Naive thymus-derived CD4-positive, alpha-beta T cell (primary cell): ENCODE measurements at regions of chr6 and their contacts with region 1.

Region 1: DNA sequence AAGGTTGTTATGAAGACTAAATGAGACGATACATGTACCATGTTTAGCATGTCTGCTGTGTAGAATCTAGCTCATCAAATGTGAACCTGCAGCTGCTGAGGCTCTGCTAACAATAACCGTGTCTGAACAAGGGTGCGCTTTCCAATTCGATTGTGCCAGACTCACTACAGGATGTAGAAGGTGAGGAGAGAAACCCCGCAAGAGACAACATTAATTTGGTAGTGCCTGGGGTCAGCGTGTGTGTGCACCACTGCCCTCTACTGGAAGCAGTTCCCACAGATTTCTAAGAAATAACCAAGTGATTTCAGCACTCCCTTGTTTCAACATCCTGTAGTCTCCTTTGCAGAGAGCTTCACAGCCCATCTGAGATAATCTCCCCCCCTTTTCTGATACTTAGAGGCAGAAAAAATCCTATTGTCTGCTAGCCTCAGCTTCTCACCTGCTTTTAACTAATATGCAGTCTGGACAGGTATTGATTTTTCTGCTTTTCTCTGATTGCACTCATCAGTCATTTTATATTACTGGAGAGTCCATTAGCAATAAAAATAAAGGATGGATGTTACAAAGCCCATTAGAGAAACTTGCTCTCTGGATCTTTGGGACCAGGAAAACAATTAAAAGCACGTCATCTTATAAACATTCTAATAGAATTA is 96.7 kb upstream of the BACH2 start:
- DNase-seq: peak; percentile 43 to 87 (median 81)
- ATAC-seq: peak; percentile 81
- H3K4me3 ChIP-seq: no peak overlapping the region
- H3K4me3 Mint-ChIP-seq: peak overlapping the region in 9 of 10 donors; percentile 2 to 59 (median 26)
- H3K27ac ChIP-seq: no peak overlapping the region
- H3K27ac Mint-ChIP-seq: peak overlapping the region; percentile 7 to 77 (median 26)
- H3K4me1 ChIP-seq: peaks cover 18 to 29% of the 10 kb centered on the region in 2 donors
- H3K4me1 Mint-ChIP-seq: peaks cover 15 to 43% (median 38%) of the 10 kb centered on the region in 7 donors
- H3K27me3 ChIP-seq: no peaks in the 10 kb centered on the region
- H3K27me3 Mint-ChIP-seq: peaks cover 0 to 4% (median 0%) of the 10 kb centered on the region in 5 donors

Region 2: GRCh38 chr6:89873721-89874120 is 519.6 kb before region 1 on chr6:
- CTCF ChIA-PET with region 1: no interaction called
- POLR2A ChIA-PET with region 1: no interaction called
- intact Hi-C with region 1: no loop called
- DNase-seq: no peak
- ATAC-seq: no peak
- H3K4me3 ChIP-seq: no peak overlapping the region
- H3K4me3 Mint-ChIP-seq: no peak overlapping the region
- H3K27ac ChIP-seq: no peak overlapping the region
- H3K27ac Mint-ChIP-seq: peak overlapping the region in 1 of 9 donors; percentile 4
- H3K4me1 ChIP-seq: no peaks in the 10 kb centered on the region
- H3K4me1 Mint-ChIP-seq: peaks cover 0 to 7% (median 0%) of the 10 kb centered on the region in 7 donors
- H3K27me3 ChIP-seq: no peaks in the 10 kb centered on the region
- H3K27me3 Mint-ChIP-seq: no peaks in the 10 kb centered on the region

Region 3: DNA sequence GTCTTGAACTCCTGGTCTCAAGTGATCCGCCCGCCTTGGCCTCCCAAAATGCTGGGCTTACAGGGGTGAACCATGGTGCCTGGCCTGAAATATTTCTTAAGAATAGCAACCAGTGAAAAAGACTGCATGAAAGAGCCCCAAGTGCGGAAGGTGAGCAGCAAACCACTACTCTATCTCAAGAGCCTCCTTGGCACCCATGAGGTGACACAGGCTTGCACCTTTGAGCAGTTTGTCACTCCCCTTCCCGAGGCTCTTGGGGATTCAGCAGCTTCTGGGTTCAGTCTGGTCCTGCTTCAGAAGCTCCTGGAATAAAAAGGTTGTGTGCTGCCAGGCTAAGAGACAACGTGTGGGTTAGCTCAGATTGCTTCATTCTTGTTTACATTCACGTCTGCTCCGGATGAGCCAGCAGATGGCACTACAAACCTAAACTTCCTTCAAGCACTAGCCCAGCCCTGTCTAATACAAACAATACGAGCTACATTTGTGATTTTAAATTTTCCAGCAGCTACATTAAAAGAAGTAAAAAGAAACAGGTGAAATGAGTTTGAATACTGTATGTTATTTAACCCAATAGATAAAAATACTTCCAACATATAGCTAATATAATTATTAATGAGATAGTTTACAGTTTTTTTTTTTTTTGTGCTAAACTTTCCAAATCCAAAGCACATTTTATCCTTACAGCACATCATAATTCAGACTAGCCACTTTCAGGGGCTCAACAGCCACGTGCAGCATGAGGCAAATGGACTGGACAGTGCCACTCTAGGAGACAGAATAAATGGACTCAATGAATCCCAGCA is 452.9 kb before region 1 on chr6:
- CTCF ChIA-PET with region 1: interaction called, 26 read pairs
- POLR2A ChIA-PET with region 1: interaction called, 3 read pairs
- intact Hi-C with region 1: loop called (anchors 1 kb)
- DNase-seq: peak; percentile 22 to 80 (median 70)
- ATAC-seq: peak; percentile 90
- H3K4me3 ChIP-seq: no peak overlapping the region
- H3K4me3 Mint-ChIP-seq: peak overlapping the region in 1 of 10 donors; percentile 48
- H3K27ac ChIP-seq: peak overlapping the region; percentile 53
- H3K27ac Mint-ChIP-seq: peak overlapping the region in 8 of 9 donors; percentile 50 to 91 (median 78)
- H3K4me1 ChIP-seq: peaks cover 0 to 9% of the 10 kb centered on the region in 2 donors
- H3K4me1 Mint-ChIP-seq: peaks cover 6 to 75% (median 39%) of the 10 kb centered on the region in 7 donors
- H3K27me3 ChIP-seq: no peaks in the 10 kb centered on the region
- H3K27me3 Mint-ChIP-seq: no peaks in the 10 kb centered on the region

Region 4: GRCh38 chr6:90216072-90216977 is 177.0 kb before region 1 on chr6:
- CTCF ChIA-PET with region 1: interaction called, 5 read pairs
- POLR2A ChIA-PET with region 1: no interaction called
- intact Hi-C with region 1: loop called (anchors 1 to 5 kb)
- DNase-seq: peak in 5 of 9 donors; percentile 61 to 82 (median 63)
- ATAC-seq: peak; percentile 69
- H3K4me3 ChIP-seq: peak overlapping the region; percentile 18
- H3K4me3 Mint-ChIP-seq: peak overlapping the region in 7 of 10 donors; percentile 42 to 74 (median 68)
- H3K27ac ChIP-seq: peak overlapping the region; percentile 85
- H3K27ac Mint-ChIP-seq: no peak overlapping the region
- H3K4me1 ChIP-seq: peaks cover 0 to 97% of the 10 kb centered on the region in 2 donors
- H3K4me1 Mint-ChIP-seq: peaks cover 0 to 33% (median 31%) of the 10 kb centered on the region in 7 donors
- H3K27me3 ChIP-seq: no peaks in the 10 kb centered on the region
- H3K27me3 Mint-ChIP-seq: no peaks in the 10 kb centered on the region

Region 5: GRCh38 chr6:90350689-90351554 is 42.4 kb before region 1 on chr6:
- CTCF ChIA-PET with region 1: no interaction called
- POLR2A ChIA-PET with region 1: no interaction called
- intact Hi-C with region 1: loop called (anchors 1 to 5 kb)
- DNase-seq: peak in 8 of 9 donors; percentile 24 to 88 (median 83)
- ATAC-seq: peak; percentile 98
- H3K4me3 ChIP-seq: no peak overlapping the region
- H3K4me3 Mint-ChIP-seq: peak overlapping the region; percentile 5 to 64 (median 50)
- H3K27ac ChIP-seq: peak overlapping the region; percentile 57
- H3K27ac Mint-ChIP-seq: peak overlapping the region; percentile 57 to 95 (median 88)
- H3K4me1 ChIP-seq: peaks cover 5 to 11% of the 10 kb centered on the region in 2 donors
- H3K4me1 Mint-ChIP-seq: peaks cover 19 to 35% (median 28%) of the 10 kb centered on the region in 7 donors
- H3K27me3 ChIP-seq: no peaks in the 10 kb centered on the region
- H3K27me3 Mint-ChIP-seq: peaks cover 0 to 4% (median 0%) of the 10 kb centered on the region in 5 donors

Region 6: DNA sequence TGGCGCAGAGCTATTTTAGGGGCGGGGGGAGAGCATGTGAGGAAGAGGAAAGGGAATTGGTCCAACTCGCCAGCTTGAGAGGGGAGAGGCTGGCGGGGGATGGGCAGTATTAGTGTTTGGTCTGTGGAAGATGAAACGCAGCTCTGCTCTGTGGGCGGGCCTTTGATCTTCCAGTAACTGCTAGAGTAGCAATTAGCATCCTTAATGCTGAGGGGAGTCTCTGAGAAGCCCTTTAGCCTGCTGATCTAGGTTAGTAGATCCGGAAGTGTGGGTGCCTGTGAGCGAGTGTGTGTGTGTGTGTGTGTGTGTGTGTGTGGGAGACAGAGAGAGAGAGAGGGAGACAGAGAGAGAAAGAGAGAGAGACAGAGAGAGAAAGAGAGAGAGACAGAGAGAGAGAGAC is 20.5 kb after region 1 on chr6:
- CTCF ChIA-PET with region 1: interaction called, 9 read pairs
- POLR2A ChIA-PET with region 1: interaction called, 10 read pairs
- intact Hi-C with region 1: loop called (anchors 1 kb)
- DNase-seq: peak; percentile 29 to 83 (median 75)
- ATAC-seq: peak; percentile 95
- H3K4me3 ChIP-seq: peak overlapping the region; percentile 40
- H3K4me3 Mint-ChIP-seq: peak overlapping the region; percentile 70 to 87 (median 75)
- H3K27ac ChIP-seq: no peak overlapping the region
- H3K27ac Mint-ChIP-seq: peak overlapping the region; percentile 63 to 96 (median 91)
- H3K4me1 ChIP-seq: peaks cover 16 to 30% of the 10 kb centered on the region in 2 donors
- H3K4me1 Mint-ChIP-seq: peaks cover 15 to 68% (median 26%) of the 10 kb centered on the region in 7 donors
- H3K27me3 ChIP-seq: no peaks in the 10 kb centered on the region
- H3K27me3 Mint-ChIP-seq: peaks cover 0 to 2% (median 0%) of the 10 kb centered on the region in 5 donors

Region 7: GRCh38 chr6:90458353-90459224 is 65.2 kb after region 1 on chr6:
- CTCF ChIA-PET with region 1: interaction called, 7 read pairs
- POLR2A ChIA-PET with region 1: interaction called, 6 read pairs
- intact Hi-C with region 1: loop called in 1 of 2 experiments (anchors 1 kb)
- DNase-seq: peak in 6 of 9 donors; percentile 37 to 74 (median 48)
- ATAC-seq: peak; percentile 70
- H3K4me3 ChIP-seq: peak overlapping the region; percentile 26
- H3K4me3 Mint-ChIP-seq: peak overlapping the region in 9 of 10 donors; percentile 45 to 82 (median 74)
- H3K27ac ChIP-seq: no peak overlapping the region
- H3K27ac Mint-ChIP-seq: peak overlapping the region in 8 of 9 donors; percentile 21 to 91 (median 80)
- H3K4me1 ChIP-seq: peaks cover 25 to 30% of the 10 kb centered on the region in 2 donors
- H3K4me1 Mint-ChIP-seq: peaks cover 23 to 65% (median 47%) of the 10 kb centered on the region in 7 donors
- H3K27me3 ChIP-seq: no peaks in the 10 kb centered on the region
- H3K27me3 Mint-ChIP-seq: no peaks in the 10 kb centered on the region

Region 8: DNA sequence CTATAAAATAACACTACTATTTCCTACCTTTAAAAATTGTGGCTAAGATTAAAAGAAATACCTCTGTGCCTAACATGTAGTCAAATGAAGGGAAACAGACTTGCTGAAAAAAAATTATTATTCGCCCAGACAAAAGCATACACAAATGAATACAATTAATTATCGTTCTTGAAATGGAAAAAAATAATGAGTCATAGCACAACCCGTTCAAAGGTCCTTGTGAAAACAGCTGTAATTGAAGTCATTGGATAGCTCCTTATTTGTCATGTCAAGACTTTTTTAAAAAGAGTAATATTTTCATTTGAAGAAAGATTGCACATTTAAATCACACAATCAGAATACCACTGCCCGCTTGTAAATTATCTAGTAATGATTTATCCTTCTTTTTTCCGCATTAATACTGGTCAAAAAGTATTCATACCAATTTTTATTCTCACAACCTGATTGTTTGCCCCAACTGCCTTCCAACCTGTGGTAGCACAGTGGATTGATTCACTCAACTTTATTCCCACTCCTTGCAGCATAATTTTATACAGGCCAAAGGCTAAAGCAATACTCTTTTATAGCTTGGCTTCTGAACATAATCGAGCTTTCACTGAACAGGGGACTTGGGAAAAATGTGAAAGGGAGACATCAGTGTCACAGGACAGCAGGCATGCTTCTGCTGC is 848.7 kb after region 1 on chr6:
- CTCF ChIA-PET with region 1: no interaction called
- POLR2A ChIA-PET with region 1: no interaction called
- intact Hi-C with region 1: no loop called
- DNase-seq: no peak
- ATAC-seq: no peak
- H3K4me3 ChIP-seq: no peak overlapping the region
- H3K4me3 Mint-ChIP-seq: no peak overlapping the region
- H3K27ac ChIP-seq: no peak overlapping the region
- H3K27ac Mint-ChIP-seq: no peak overlapping the region
- H3K4me1 ChIP-seq: no peaks in the 10 kb centered on the region
- H3K4me1 Mint-ChIP-seq: no peaks in the 10 kb centered on the region
- H3K27me3 ChIP-seq: no peaks in the 10 kb centered on the region
- H3K27me3 Mint-ChIP-seq: no peaks in the 10 kb centered on the region